ENCODE measurements at regions of chr17 and their contacts with region 1.

Region 1: GRCh38 chr17:45021607-45022287 is 29.7 kb downstream of the DCAKD start:
- DNase-seq: peak; percentile 73

Region 2: GRCh38 chr17:45123930-45124796 is 102.4 kb after region 1 on chr17:
- in situ Hi-C with region 1: loop called (anchors 10 kb)
- DNase-seq: peak; percentile 90

Measured in ACHN (cell line).